ENCODE measurements at regions of chr1 and their contacts with region 1.

Region 1: GRCh38 chr1:119711804-119712341 is at the start of gene PHGDH:
- DNase-seq: peak; percentile 61
- H3K4me3 Mint-ChIP-seq: peak within 1 kb of the TSS; percentile 91
- H3K27ac Mint-ChIP-seq: peak within 1 kb of the TSS; percentile 77
- H3K4me1 Mint-ChIP-seq: peaks cover 38% of the 10 kb centered on the region
- H3K27me3 Mint-ChIP-seq: peaks cover 25% of the 10 kb centered on the region
- total RNA-seq, gene PHGDH: 58.7 and 61.6 TPM in 2 replicates

Region 2: DNA sequence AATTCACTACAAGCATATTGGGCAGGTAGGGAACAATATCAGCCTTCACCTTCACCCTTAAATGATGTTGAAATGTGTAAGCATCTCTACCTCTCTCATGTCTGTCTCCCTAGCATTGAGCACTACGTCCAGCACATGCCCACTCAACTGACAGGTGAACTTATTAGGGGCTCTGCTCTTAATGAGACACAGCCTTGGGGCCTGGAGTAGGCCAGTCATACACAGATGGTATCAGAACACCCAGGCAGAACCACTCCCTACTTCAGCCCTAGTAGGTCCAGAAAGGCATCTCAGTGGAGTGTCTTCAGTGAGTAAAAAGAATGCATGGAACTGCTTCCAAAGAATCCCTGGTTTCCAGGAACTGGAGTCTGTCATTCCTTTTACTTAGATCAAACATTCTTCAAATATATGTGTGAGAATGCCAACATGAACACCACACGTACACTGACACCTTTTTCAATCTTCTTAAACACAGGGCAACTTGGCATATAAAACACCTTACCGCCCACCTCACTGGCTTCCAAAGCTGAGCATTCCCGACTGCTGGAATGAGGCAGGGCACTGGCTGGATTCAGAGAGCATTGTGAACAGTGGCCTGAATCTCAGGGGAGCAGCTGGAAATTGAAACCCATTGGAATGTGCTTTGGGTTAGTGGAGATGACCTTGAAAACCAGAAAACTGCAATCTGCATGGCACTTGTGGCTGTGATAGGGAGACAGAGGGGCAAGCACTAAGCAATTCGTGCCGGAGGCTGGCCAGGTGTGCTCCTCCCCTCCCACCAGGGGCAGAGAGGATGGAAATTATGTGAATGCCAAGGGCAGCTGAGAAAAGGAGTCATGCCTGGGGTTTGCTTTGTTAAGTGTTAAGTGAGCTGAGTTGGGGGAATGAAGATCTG is 229.1 kb before region 1 on chr1:
- intact Hi-C with region 1: no loop called
- DNase-seq: no peak
- H3K4me3 Mint-ChIP-seq: no peak overlapping the region
- H3K27ac Mint-ChIP-seq: no peak overlapping the region
- H3K4me1 Mint-ChIP-seq: no peaks in the 10 kb centered on the region
- H3K27me3 Mint-ChIP-seq: peaks cover 7% of the 10 kb centered on the region

Region 3: GRCh38 chr1:119626841-119627240 is 85.0 kb before region 1 on chr1:
- intact Hi-C with region 1: no loop called
- DNase-seq: no peak
- H3K4me3 Mint-ChIP-seq: no peak overlapping the region
- H3K27ac Mint-ChIP-seq: no peak overlapping the region
- H3K4me1 Mint-ChIP-seq: peaks cover 5% of the 10 kb centered on the region
- H3K27me3 Mint-ChIP-seq: peaks cover 19% of the 10 kb centered on the region

Region 4: DNA sequence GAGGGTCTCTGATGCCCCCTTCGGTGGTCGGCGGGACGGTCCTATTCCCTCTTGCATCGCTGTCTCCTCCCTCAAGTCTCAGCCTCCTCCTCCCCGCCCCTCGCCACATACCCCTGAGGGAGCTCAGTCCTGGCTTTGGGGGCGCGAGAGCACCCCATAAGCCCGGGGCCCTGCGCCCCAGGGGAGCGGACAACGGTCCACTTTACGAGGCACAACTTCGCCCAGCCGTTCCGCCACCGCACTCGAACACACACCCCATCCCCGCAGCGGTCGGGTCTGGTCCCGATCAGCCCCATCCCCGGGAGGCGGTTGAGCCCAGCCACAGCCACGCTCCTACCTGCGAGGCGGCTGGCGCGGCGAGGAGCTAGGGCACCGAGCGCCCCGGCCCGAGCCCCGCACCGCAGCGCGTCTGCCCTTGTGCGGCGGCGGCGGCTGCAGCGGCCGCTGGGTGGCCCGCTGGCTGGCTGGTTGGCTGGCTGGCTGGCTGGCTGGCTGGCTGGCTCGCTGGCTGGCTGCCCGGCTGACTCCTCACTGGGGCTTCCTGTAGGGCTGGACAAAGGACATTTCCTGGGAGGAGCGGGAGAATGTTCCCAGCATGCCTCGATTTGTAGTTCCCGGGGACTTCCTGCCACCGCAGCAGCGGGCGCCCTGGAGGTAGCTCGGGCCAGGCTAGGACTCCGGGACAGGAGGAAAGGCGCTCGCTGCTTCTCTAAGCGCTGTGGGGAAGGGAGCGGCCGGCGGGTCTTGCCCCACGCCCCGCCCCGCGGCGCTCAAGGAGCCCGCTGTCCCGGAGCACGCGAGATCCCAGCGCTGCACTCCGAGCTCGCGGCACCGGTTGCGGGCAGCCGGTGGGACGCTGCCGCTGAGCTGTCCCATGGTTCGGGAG is 63.9 kb before region 1 on chr1 and contains the start of gene ZNF697:
- intact Hi-C with region 1: loop called (anchors 5 kb)
- DNase-seq: peak; percentile 50
- H3K4me3 Mint-ChIP-seq: peak within 1 kb of the TSS; percentile 92
- H3K27ac Mint-ChIP-seq: peak within 1 kb of the TSS; percentile 69
- H3K4me1 Mint-ChIP-seq: peaks cover 56% of the 10 kb centered on the region
- H3K27me3 Mint-ChIP-seq: peaks cover 21% of the 10 kb centered on the region
- total RNA-seq, gene ZNF697: 12.6 and 13.0 TPM in 2 replicates

Region 5: DNA sequence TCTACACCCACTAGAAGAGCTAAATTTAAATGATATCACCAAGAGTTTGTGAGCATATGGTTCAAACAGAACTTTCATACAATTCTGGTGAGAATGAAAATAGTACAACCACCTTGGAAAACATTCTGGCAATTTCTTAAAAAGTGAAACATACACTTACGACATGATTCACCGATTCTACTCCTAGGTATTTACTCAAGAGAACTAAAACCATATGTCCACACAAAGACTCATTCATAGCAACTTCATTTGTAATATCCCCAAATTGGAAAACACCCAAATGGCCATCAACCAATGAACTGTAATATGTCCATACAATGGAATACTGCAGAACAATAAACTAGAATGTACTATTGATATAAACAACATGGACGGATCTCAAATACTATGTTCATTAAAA is 235.6 kb after region 1 on chr1:
- intact Hi-C with region 1: no loop called
- DNase-seq: no peak
- H3K4me3 Mint-ChIP-seq: no peak overlapping the region
- H3K27ac Mint-ChIP-seq: no peak overlapping the region
- H3K4me1 Mint-ChIP-seq: peaks cover 2% of the 10 kb centered on the region
- H3K27me3 Mint-ChIP-seq: no peaks in the 10 kb centered on the region

Measured in activated T-helper 2 cell treated with anti-CD3 and anti-CD28 coated beads, Interferon-gamma antibody, Interleukin-2, Interleukin-4, amounts not matched to agents 10 μg/mL and 5 μg/mL and 100 μg/mL, durations not matched to agents 14 hours and 24 hours and 36 hours (primary cell).